Right cardiac atrium (tissue), 5 donors: ENCODE measurements at regions of chr19 and their contacts with region 1.

Region 1: DNA sequence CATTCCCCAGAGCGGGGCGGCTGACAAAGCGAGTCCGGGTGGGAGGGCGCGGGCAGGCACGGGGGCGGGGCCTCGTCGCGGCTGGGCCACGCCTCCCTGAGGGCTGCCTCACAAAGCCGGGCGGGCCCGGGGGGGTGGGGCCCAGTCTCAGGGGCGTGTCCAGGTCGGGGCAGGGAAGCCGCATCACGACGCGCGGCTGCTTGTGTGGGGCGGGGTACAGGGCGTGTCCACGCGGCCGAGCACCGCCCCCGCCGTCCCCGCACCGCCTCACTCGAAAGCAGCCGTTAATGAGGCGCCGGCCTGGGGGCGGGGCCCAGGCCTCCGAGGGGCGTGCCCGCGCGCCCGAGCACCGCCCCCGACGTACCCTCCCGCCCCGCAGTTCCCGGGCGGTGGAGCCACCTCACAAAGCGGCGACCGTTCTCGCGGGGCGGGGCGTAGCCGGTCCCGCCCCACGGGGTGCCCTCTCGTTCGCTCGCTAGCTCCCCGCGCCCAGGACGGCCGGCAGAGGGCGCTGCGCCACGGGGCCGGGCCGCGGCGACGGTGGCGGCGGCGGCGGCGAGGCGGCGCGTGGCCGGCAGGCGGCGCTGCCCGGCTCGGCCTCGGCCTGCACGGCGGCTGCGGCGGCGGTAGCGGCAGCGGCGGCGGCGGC is at the start of gene CARM1:
- DNase-seq: peak; percentile 99 to 100 (median 100)
- ATAC-seq: peak; percentile 97 to 98
- H3K4me3 ChIP-seq: peak within 1 kb of the TSS; percentile 98
- H3K27ac ChIP-seq: peak within 1 kb of the TSS; percentile 76
- H3K4me1 ChIP-seq: no peaks in the 10 kb centered on the region
- H3K27me3 ChIP-seq: no peaks in the 10 kb centered on the region
- total RNA-seq, gene CARM1: 30.8 to 37.2 (median 32.6) TPM

Region 2: DNA sequence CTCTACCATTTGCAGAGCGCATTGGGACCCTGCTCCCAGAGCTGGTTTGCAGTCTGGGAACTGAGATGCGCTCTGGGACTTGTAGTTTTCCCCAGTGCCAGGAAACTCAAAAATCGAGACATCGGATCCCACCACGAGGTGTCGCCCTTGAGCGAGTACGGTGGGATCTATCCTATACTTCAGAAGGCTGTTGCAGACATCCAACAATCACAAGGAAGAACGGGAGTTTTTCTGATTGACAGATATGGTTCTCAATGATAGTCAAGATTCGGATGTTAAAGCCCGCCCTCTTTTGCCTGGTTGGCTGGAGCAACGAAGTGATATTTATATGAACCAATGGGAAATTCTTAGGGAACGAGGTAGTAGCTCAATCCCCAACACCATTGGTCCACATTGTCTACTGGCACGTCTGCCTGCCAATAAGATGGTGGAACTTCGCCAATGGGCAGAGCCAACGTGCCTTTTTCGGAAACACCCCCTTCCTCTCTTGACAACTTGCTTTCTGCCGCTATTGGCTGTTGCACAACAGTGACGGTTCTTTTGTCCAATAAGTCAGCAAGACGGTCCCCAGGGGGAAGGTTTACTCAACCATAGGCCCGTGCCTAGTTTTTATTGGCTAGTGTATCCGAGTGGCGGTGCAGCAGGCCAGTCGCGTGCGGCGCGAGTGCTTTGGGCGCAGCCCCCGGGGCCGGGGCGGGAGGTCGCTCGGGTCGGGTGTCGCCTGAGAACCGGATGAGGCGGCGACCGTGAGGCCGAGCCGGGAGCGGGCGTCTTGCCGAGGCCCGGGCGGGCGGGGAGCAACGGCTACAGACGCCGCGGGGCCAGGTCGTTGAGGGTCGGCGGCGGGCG is 153.5 kb before region 1 on chr19 and contains the start of gene DNM2:
- intact Hi-C with region 1: loop called (anchors 5 to 10 kb)
- DNase-seq: peak; percentile 98 to 99 (median 99)
- ATAC-seq: peak; percentile 94 to 96
- H3K4me3 ChIP-seq: peak within 1 kb of the TSS; percentile 96
- H3K27ac ChIP-seq: peak within 1 kb of the TSS; percentile 95
- H3K4me1 ChIP-seq: peaks cover 15% of the 10 kb centered on the region
- H3K27me3 ChIP-seq: no peaks in the 10 kb centered on the region
- total RNA-seq, gene DNM2: 176 to 202 (median 189) TPM

Region 3: DNA sequence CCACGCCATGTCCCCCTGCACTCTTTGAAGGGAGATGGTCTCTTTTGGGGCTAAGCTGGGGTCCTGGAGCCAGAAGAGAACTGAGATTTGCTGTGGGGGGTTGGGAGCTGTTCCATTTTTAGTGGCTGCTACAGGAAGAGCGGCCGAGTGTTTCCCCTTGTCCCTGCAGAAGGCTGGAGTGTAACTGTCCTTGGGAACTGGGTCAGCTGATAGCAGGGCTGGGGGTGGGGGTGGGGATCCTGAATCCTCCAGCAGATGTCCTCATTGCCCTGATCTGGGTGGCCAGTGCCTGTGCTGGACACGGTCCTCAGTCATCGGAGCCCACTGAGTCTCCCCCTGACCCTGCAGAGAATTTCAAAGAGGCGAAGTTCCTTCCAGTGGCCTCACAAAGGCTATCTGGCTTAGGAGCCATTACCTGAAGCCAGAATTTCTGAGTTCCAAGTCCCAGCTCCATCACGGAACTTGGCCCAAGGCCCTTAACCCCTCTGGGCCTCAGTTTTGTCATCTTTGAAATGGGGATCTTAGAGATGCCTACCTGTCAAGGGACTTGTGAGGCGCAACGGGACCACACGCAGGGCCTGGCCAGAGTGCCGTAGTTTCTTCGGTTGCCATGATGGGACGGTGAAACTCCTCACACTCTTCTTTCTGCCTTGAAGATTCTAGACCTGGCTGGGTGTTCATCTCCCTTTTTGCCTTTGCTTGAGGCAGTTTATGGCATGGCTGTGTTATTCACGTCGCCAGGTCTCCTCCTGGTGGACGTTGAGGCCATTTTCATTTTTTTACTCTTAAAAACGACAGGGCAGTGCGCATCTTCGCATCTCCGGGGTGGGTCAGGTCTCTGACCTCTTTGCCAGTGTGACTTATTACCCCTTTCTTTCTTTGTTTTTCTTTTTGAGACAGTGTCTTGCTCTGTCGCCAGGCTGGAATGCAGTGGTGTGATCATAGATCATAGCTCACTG is 101.3 kb before region 1 on chr19:
- intact Hi-C with region 1: loop called in 2 of 4 experiments (anchors 5 to 10 kb)
- DNase-seq: peak; percentile 52 to 86 (median 84)
- ATAC-seq: peak; percentile 75 to 82
- H3K4me3 ChIP-seq: no peak overlapping the region
- H3K27ac ChIP-seq: peak overlapping the region; percentile 90
- H3K4me1 ChIP-seq: peaks cover 21% of the 10 kb centered on the region
- H3K27me3 ChIP-seq: no peaks in the 10 kb centered on the region

Region 4: GRCh38 chr19:10835754-10836477 is 35.2 kb before region 1 on chr19 and contains the start of gene TMED1:
- intact Hi-C with region 1: loop called in 1 of 4 experiments (anchors 2 kb)
- DNase-seq: peak; percentile 99 to 100 (median 100)
- ATAC-seq: peak; percentile 95
- H3K4me3 ChIP-seq: peak within 1 kb of the TSS; percentile 47
- H3K27ac ChIP-seq: peak within 1 kb of the TSS; percentile 74
- H3K4me1 ChIP-seq: peaks cover 3% of the 10 kb centered on the region
- H3K27me3 ChIP-seq: no peaks in the 10 kb centered on the region
- total RNA-seq, gene TMED1: 24.6 to 30.4 (median 27.8) TPM

Region 5: DNA sequence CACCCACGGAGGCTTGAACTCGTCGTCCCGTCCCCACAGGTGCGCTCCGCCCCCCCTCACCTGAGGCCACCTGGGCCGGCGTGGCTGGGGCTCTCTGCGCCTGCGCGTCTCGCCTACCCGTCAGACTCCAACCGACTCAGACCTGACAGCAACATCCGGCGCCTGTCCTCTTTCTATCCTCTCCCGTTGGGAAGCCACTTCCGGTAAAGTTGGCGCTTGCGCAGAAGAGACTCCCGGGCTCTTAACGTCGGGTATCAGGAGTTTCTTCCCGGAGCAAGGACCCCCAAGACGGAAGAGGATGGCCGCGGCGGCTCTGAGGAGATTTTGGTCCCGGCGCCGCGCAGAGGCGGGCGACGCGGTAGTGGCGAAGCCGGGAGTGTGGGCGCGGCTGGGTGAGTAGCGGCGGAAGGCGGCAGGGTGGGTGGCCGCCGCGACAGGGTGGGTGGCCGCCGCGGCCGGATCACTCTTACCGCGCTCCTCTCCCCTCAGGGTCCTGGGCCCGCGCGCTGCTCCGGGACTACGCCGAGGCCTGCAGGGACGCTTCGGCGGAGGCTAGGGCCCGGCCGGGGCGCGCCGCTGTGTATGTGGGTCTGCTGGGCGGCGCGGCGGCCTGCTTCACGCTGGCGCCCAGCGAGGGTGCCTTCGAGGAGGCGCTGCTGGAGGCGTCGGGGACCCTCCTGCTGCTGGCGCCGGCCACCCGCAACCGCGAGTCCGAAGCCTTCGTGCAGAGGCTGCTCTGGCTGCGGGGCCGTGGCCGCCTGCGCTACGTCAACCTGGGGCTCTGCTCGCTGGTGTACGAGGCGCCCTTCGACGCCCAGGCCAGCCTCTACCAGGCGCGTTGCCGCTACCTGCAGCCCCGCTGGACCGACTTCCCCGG is 57.7 kb after region 1 on chr19 and contains the starts of genes TIMM29 and YIPF2:
- intact Hi-C with region 1: loop called in 3 of 4 experiments (anchors 5 to 10 kb)
- DNase-seq: peak; percentile 98
- ATAC-seq: peak; percentile 95 to 96
- H3K4me3 ChIP-seq: peak within 1 kb of the TSS; percentile 69
- H3K27ac ChIP-seq: peak within 1 kb of the TSS; percentile 42
- H3K4me1 ChIP-seq: peaks cover 7% of the 10 kb centered on the region
- H3K27me3 ChIP-seq: no peaks in the 10 kb centered on the region
- total RNA-seq, gene TIMM29: 12.2 to 14.5 (median 13.0) TPM
- total RNA-seq, gene YIPF2: 19.3 to 25.5 (median 24.4) TPM